ENCODE measurements at regions of chr11 and their contacts with region 1.

Region 1: GRCh38 chr11:36608491-36609199 is 10.6 kb upstream of the RAG2 start:
- DNase-seq: no peak
- H3K4me3 ChIP-seq: no peak overlapping the region
- H3K27ac ChIP-seq: no peak overlapping the region
- H3K4me1 ChIP-seq: peaks cover 0 to 20% (median 4%) of the 10 kb centered on the region in 4 experiments
- H3K27me3 ChIP-seq: no peaks in the 10 kb centered on the region

Region 2: GRCh38 chr11:36622431-36623136 is 13.9 kb after region 1 on chr11:
- CTCF ChIA-PET with region 1: interaction called, 11 read pairs
- POLR2A ChIA-PET with region 1: no interaction called
- DNase-seq: peak; percentile 71 to 86 (median 82)
- H3K4me3 ChIP-seq: no peak overlapping the region
- H3K27ac ChIP-seq: no peak overlapping the region
- H3K4me1 ChIP-seq: peaks cover 9 to 32% (median 17%) of the 10 kb centered on the region in 4 experiments
- H3K27me3 ChIP-seq: no peaks in the 10 kb centered on the region